ENCODE measurements at regions of chr2 and their contacts with region 1.

Region 1: GRCh38 chr2:46590319-46590718 is 111.0 kb downstream of the TMEM247 start:
- DNase-seq: no peak
- H3K4me3 Mint-ChIP-seq: no peak overlapping the region
- H3K27ac Mint-ChIP-seq: no peak overlapping the region
- H3K4me1 Mint-ChIP-seq: peaks cover 5% of the 10 kb centered on the region
- H3K27me3 Mint-ChIP-seq: no peaks in the 10 kb centered on the region
- CTCF ChIP-seq: no peak

Region 2: GRCh38 chr2:46481198-46482193 is 108.8 kb before region 1 on chr2:
- CTCF ChIA-PET with region 1: interaction called, 3 read pairs
- POLR2A ChIA-PET with region 1: no interaction called
- intact Hi-C with region 1: loop called (anchors 5 kb)
- DNase-seq: peak; percentile 87
- H3K4me3 Mint-ChIP-seq: no peak overlapping the region
- H3K27ac Mint-ChIP-seq: no peak overlapping the region
- H3K4me1 Mint-ChIP-seq: peaks cover 15% of the 10 kb centered on the region
- H3K27me3 Mint-ChIP-seq: no peaks in the 10 kb centered on the region
- CTCF ChIP-seq: no peak

Measured in MCF 10A (cell line).